AG04450 (cell line): ENCODE measurements at regions of chr2 and their contacts with region 1.

Region 1: GRCh38 chr2:112626604-112627059 is 19.1 kb upstream of the SLC20A1 start:
- DNase-seq: no peak
- H3K4me3 ChIP-seq: peak overlapping the region; percentile 35
- H3K27ac ChIP-seq: peak overlapping the region; percentile 95
- H3K27me3 ChIP-seq: no peaks in the 10 kb centered on the region
- CTCF ChIP-seq: peak; percentile 93

Region 2: DNA sequence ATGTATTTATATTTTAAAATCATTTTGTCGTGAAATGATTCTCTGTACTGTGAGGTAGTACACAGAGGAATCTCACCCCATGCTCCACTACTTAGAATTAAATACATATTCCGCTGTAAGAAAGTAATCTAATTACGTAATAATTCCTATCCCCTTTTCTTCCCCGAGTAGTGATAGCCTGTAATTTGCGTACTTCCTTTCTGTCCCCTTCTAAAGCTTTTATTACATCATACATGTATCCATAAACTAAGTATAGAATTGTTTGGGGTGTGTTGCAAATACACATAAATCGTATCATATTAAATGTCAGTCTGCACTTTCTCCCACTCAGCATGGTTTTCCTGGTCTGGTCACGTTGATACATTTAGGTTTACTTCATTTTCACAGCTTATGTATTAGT is 54.6 kb before region 1 on chr2:
- CTCF ChIA-PET with region 1: no interaction called
- POLR2A ChIA-PET with region 1: no interaction called
- DNase-seq: no peak
- H3K4me3 ChIP-seq: no peak overlapping the region
- H3K27ac ChIP-seq: no peak overlapping the region
- H3K27me3 ChIP-seq: no peaks in the 10 kb centered on the region
- CTCF ChIP-seq: no peak

Region 3: DNA sequence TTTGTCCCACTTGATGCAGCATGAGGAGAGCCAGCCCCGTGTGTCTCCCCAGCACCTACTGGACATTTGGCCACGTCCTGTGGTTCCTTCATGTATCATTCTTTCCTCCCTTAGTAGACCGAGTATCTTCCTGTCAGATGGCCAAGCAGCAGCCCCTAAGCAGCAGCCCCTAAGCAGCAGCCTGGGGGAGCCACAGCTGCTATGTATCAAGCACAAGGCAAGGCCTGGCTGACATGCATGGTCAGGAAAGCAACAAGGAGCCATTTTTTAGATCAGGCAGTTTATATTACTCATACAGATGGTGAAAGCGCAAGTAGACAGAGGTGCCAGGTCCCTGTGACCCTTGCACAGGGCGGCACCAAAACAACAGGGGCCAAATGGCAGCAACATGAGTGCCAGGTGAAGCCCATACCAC is 20.1 kb before region 1 on chr2:
- CTCF ChIA-PET with region 1: interaction called, 10 read pairs
- POLR2A ChIA-PET with region 1: interaction called, 4 read pairs
- DNase-seq: no peak
- H3K4me3 ChIP-seq: no peak overlapping the region
- H3K27ac ChIP-seq: peak overlapping the region; percentile 21
- H3K27me3 ChIP-seq: no peaks in the 10 kb centered on the region
- CTCF ChIP-seq: no peak

Region 4: DNA sequence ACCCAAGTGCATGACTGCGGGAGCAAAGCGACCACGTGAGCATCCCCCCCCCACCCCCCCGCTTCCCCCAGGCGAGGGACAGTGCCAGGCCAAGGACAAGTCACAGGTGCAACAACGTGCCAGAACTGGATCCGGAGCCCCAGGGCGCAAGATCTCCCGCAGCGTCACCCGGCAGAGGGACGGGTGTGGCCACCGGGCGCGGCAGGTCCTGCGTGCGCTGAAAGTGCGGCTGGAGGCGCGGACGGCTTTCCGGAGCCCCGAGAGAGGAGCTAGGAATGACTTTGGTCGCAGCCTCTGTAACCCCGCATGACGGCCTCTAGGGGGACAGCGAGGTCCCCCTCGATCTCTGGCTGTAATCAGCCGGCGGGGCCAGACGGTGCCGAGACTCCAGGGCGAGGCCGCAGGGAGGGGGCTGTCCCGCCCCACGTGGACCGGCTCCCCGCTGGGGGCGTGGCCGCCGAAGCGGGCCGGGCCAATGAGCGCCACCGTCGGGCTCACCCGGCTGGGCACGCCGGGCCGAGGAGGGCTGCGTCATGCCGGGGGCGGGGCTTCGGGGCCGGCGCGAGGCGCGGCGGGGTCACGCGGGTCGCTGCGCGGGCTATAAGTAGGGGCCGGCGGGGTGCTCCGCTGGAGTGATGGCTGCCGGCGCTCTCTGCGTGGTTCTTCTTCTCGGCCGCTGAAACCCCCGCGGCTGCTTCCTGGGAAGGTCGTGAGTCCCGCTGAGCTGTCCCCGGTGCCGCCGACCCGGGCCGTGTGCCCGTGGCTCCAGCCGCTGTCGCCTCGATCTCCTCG is 18.9 kb after region 1 on chr2 and contains the start of gene SLC20A1:
- CTCF ChIA-PET with region 1: interaction called, 20 read pairs
- POLR2A ChIA-PET with region 1: interaction called, 31 read pairs
- DNase-seq: peak; percentile 69
- H3K4me3 ChIP-seq: peak within 1 kb of the TSS; percentile 86
- H3K27ac ChIP-seq: peak within 1 kb of the TSS; percentile 85
- H3K27me3 ChIP-seq: no peaks in the 10 kb centered on the region
- CTCF ChIP-seq: peak; percentile 32
- polyA plus RNA-seq, gene SLC20A1: 71.8 and 74.8 TPM in 2 replicates

Region 5: GRCh38 chr2:112670252-112671022 is 43.8 kb after region 1 on chr2:
- CTCF ChIA-PET with region 1: interaction called, 3 read pairs
- POLR2A ChIA-PET with region 1: interaction called, 10 read pairs
- DNase-seq: no peak
- H3K4me3 ChIP-seq: no peak overlapping the region
- H3K27ac ChIP-seq: no peak overlapping the region
- H3K27me3 ChIP-seq: no peaks in the 10 kb centered on the region
- CTCF ChIP-seq: no peak